Naive thymus-derived CD4-positive, alpha-beta T cell (primary cell): ENCODE measurements at regions of chr1 and their contacts with region 1.

Region 1: DNA sequence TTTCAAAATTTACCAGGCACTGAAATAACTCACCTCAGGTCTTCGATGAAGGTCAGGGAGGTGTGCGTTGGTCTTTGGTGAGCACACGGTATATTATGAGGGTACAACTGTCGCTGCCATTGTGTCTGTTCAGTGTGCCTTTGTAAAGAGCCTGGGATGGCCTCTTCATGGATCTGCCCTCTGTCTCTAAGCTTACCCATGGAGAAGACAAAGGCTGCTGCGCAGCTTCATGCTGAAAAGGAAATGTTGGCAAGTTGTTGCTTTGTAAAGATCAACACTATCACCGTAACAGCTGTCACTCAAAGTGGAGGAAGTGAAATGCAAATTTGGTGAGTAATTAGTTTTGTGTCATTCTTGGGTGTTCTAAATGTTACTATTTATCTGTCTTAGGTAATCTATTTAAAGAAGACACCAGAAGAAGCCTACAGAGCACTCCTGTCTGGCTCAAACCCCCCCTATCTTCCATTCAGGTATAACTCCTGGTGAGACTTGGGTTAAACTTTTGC is 71.6 kb downstream of the CDC14A start:
- DNase-seq: peak in 4 of 9 donors; percentile 26 to 58 (median 52)
- ATAC-seq: peak; percentile 56
- H3K4me3 ChIP-seq: peak overlapping the region; percentile 41
- H3K4me3 Mint-ChIP-seq: peak overlapping the region; percentile 51 to 88 (median 80)
- H3K27ac ChIP-seq: peak overlapping the region; percentile 69
- H3K27ac Mint-ChIP-seq: peak overlapping the region; percentile 85 to 98 (median 92)
- H3K4me1 ChIP-seq: peaks cover 29 to 43% of the 10 kb centered on the region in 2 donors
- H3K4me1 Mint-ChIP-seq: peaks cover 31 to 92% (median 73%) of the 10 kb centered on the region in 7 donors
- H3K27me3 ChIP-seq: no peaks in the 10 kb centered on the region
- H3K27me3 Mint-ChIP-seq: no peaks in the 10 kb centered on the region

Region 2: GRCh38 chr1:100037927-100038659 is 385.8 kb before region 1 on chr1:
- CTCF ChIA-PET with region 1: no interaction called
- POLR2A ChIA-PET with region 1: no interaction called
- intact Hi-C with region 1: no loop called
- DNase-seq: peak; percentile 83 to 92 (median 88)
- ATAC-seq: peak; percentile 91
- H3K4me3 ChIP-seq: peak overlapping the region; percentile 70
- H3K4me3 Mint-ChIP-seq: peak overlapping the region; percentile 93 to 99 (median 97)
- H3K27ac ChIP-seq: peak overlapping the region; percentile 99
- H3K27ac Mint-ChIP-seq: peak overlapping the region; percentile 97 to 100 (median 99)
- H3K4me1 ChIP-seq: peaks cover 22 to 31% of the 10 kb centered on the region in 2 donors
- H3K4me1 Mint-ChIP-seq: peaks cover 29 to 68% (median 58%) of the 10 kb centered on the region in 7 donors
- H3K27me3 ChIP-seq: no peaks in the 10 kb centered on the region
- H3K27me3 Mint-ChIP-seq: no peaks in the 10 kb centered on the region

Region 3: GRCh38 chr1:100394285-100394684 is 29.6 kb before region 1 on chr1:
- CTCF ChIA-PET with region 1: interaction called, 6 read pairs
- POLR2A ChIA-PET with region 1: interaction called, 18 read pairs
- intact Hi-C with region 1: no loop called
- DNase-seq: peak in 2 of 9 donors; percentile 51 to 61
- ATAC-seq: peak; percentile 23
- H3K4me3 ChIP-seq: peak overlapping the region; percentile 15
- H3K4me3 Mint-ChIP-seq: peak overlapping the region; percentile 30 to 82 (median 62)
- H3K27ac ChIP-seq: peak overlapping the region; percentile 64
- H3K27ac Mint-ChIP-seq: peak overlapping the region; percentile 73 to 98 (median 92)
- H3K4me1 ChIP-seq: peaks cover 86 to 93% of the 10 kb centered on the region in 2 donors
- H3K4me1 Mint-ChIP-seq: peaks cover 58 to 100% (median 97%) of the 10 kb centered on the region in 7 donors
- H3K27me3 ChIP-seq: no peaks in the 10 kb centered on the region
- H3K27me3 Mint-ChIP-seq: no peaks in the 10 kb centered on the region

Region 4: DNA sequence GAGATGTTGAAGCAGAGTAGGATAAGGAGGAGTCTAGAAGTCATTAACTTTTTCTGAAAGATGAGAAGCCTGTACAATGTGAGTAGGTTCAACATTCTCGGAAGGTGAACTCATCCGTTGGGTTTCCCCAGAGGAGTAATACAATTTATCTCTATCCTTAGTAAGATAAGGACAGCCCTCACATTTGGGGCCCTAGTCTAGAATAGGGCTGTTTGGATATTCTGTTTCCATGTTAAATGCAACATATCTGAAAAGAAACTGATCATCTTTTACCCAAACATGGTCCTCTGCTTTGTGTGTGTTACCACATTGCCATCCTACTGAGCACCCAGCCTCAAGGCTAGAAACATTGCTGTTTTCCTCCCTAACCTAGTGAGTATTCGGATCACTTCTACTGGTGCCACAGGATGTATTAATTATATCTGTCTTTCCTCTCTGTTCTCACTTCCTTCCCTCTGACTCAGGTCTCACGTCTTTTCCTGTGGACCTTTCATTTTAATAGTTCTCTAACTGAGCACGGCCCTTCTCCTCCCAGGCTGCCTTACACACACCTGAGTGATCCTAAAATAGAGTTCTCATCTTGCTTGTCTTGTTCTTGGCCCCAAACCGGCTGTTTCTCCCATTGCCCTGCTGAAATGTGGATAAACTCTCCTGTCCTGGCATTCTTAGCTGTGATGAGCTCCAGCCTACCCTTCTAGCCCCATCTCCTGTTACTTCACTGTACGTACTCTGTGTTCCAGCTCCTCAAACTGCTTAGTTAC is 20.1 kb after region 1 on chr1:
- CTCF ChIA-PET with region 1: interaction called, 3 read pairs
- POLR2A ChIA-PET with region 1: interaction called, 28 read pairs
- intact Hi-C with region 1: loop called (anchors 1 kb)
- DNase-seq: peak in 5 of 9 donors; percentile 31 to 42 (median 36)
- ATAC-seq: peak; percentile 6
- H3K4me3 ChIP-seq: peak overlapping the region; percentile 12
- H3K4me3 Mint-ChIP-seq: peak overlapping the region; percentile 66 to 86 (median 81)
- H3K27ac ChIP-seq: peak overlapping the region; percentile 93
- H3K27ac Mint-ChIP-seq: peak overlapping the region; percentile 92 to 99 (median 98)
- H3K4me1 ChIP-seq: peaks cover 83 to 84% of the 10 kb centered on the region in 2 donors
- H3K4me1 Mint-ChIP-seq: peaks cover 53 to 95% (median 87%) of the 10 kb centered on the region in 7 donors
- H3K27me3 ChIP-seq: no peaks in the 10 kb centered on the region
- H3K27me3 Mint-ChIP-seq: no peaks in the 10 kb centered on the region

Region 5: GRCh38 chr1:100452641-100453040 is 28.8 kb after region 1 on chr1:
- CTCF ChIA-PET with region 1: interaction called, 14 read pairs
- POLR2A ChIA-PET with region 1: interaction called, 11 read pairs
- intact Hi-C with region 1: loop called in 1 of 2 experiments (anchors 5 kb)
- DNase-seq: peak in 7 of 9 donors; percentile 41 to 81 (median 64)
- ATAC-seq: peak; percentile 95
- H3K4me3 ChIP-seq: no peak overlapping the region
- H3K4me3 Mint-ChIP-seq: peak overlapping the region; percentile 20 to 63 (median 50)
- H3K27ac ChIP-seq: peak overlapping the region; percentile 80
- H3K27ac Mint-ChIP-seq: peak overlapping the region; percentile 79 to 99 (median 93)
- H3K4me1 ChIP-seq: peaks cover 55 to 59% of the 10 kb centered on the region in 2 donors
- H3K4me1 Mint-ChIP-seq: peaks cover 29 to 92% (median 84%) of the 10 kb centered on the region in 7 donors
- H3K27me3 ChIP-seq: no peaks in the 10 kb centered on the region
- H3K27me3 Mint-ChIP-seq: no peaks in the 10 kb centered on the region